ENCODE measurements at regions of chr20 and their contacts with region 1.

Region 1: GRCh38 chr20:63707549-63708300 is at the starts of genes ARFRP1 and ZGPAT:
- DNase-seq: peak; percentile 77 to 92 (median 88)
- ATAC-seq: peak; percentile 92
- H3K4me3 ChIP-seq: peak within 1 kb of the TSS; percentile 91
- H3K4me3 Mint-ChIP-seq: peak within 1 kb of the TSS; percentile 86 to 95 (median 90)
- H3K27ac ChIP-seq: peak within 1 kb of the TSS; percentile 81
- H3K27ac Mint-ChIP-seq: peak within 1 kb of the TSS; percentile 82 to 97 (median 87)
- H3K4me1 ChIP-seq: peaks cover 22 to 30% of the 10 kb centered on the region in 2 donors
- H3K4me1 Mint-ChIP-seq: peaks cover 33 to 61% (median 46%) of the 10 kb centered on the region in 7 donors
- H3K27me3 ChIP-seq: no peaks in the 10 kb centered on the region
- H3K27me3 Mint-ChIP-seq: no peaks in the 10 kb centered on the region
- total RNA-seq, gene ARFRP1: 55.4 to 92.1 (median 66.2) TPM
- total RNA-seq, gene ZGPAT: 42.9 to 49.9 (median 45.4) TPM

Region 2: DNA sequence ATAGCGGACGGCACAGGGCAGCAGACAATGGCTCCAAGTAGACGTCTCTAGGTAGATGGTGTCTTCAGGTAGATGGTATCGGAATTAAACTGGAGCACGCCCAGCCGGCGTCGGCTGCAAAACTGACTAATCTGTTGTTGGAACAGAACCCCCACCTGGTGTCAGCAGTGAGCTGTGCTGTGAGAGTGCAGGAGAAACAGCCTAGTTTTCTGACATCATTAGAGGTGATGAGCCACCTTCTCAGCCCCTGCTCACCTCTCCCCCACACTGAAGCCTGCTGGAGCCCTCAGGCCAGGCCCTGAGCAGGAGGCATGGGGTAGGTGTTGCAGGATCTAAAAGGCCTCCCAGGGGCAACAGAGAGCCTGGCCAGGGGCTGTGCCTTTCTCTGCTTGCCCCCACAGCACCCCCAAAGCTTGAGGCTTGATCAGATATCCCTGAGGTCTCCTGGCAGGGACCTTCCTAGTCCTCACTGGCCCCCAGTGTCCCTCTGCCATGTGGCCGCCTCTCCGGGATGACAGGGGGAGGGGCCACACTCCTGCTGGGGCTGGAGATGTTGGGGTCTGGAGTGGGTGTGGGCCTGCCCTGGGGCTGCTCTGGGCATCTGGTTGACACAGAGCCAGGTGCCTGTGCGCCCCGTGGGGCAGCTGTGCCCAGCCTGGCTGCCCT is 126.8 kb before region 1 on chr20:
- CTCF ChIA-PET with region 1: no interaction called
- POLR2A ChIA-PET with region 1: no interaction called
- intact Hi-C with region 1: loop called in 1 of 2 experiments (anchors 2 kb)
- DNase-seq: peak; percentile 30 to 87 (median 81)
- ATAC-seq: peak; percentile 96
- H3K4me3 ChIP-seq: no peak overlapping the region
- H3K4me3 Mint-ChIP-seq: peak overlapping the region in 1 of 10 donors; percentile 17
- H3K27ac ChIP-seq: no peak overlapping the region
- H3K27ac Mint-ChIP-seq: peak overlapping the region in 1 of 9 donors; percentile 74
- H3K4me1 ChIP-seq: peaks cover 0 to 10% of the 10 kb centered on the region in 2 donors
- H3K4me1 Mint-ChIP-seq: peaks cover 0 to 17% (median 14%) of the 10 kb centered on the region in 7 donors
- H3K27me3 ChIP-seq: no peaks in the 10 kb centered on the region
- H3K27me3 Mint-ChIP-seq: peaks cover 0 to 42% (median 0%) of the 10 kb centered on the region in 5 donors

Region 3: GRCh38 chr20:63733186-63734081 is 25.7 kb after region 1 on chr20:
- CTCF ChIA-PET with region 1: interaction called, 27 read pairs
- POLR2A ChIA-PET with region 1: interaction called, 137 read pairs
- intact Hi-C with region 1: loop called (anchors 1 to 2 kb)
- DNase-seq: no peak
- ATAC-seq: no peak
- H3K4me3 ChIP-seq: no peak overlapping the region
- H3K4me3 Mint-ChIP-seq: peak overlapping the region in 6 of 10 donors; percentile 18 to 68 (median 40)
- H3K27ac ChIP-seq: no peak overlapping the region
- H3K27ac Mint-ChIP-seq: peak overlapping the region in 8 of 9 donors; percentile 19 to 87 (median 68)
- H3K4me1 ChIP-seq: peaks cover 44 to 51% of the 10 kb centered on the region in 2 donors
- H3K4me1 Mint-ChIP-seq: peaks cover 24 to 33% (median 29%) of the 10 kb centered on the region in 7 donors
- H3K27me3 ChIP-seq: no peaks in the 10 kb centered on the region
- H3K27me3 Mint-ChIP-seq: no peaks in the 10 kb centered on the region

Region 4: GRCh38 chr20:63782051-63782471 is 74.3 kb after region 1 on chr20:
- CTCF ChIA-PET with region 1: interaction called, 5 read pairs
- POLR2A ChIA-PET with region 1: interaction called, 4 read pairs
- intact Hi-C with region 1: loop called in 1 of 2 experiments (anchors 1 kb)
- DNase-seq: peak in 6 of 9 donors; percentile 60 to 74 (median 64)
- ATAC-seq: peak; percentile 95
- H3K4me3 ChIP-seq: no peak overlapping the region
- H3K4me3 Mint-ChIP-seq: peak overlapping the region in 8 of 10 donors; percentile 31 to 78 (median 48)
- H3K27ac ChIP-seq: no peak overlapping the region
- H3K27ac Mint-ChIP-seq: peak overlapping the region in 6 of 9 donors; percentile 55 to 92 (median 64)
- H3K4me1 ChIP-seq: peaks cover 8 to 9% of the 10 kb centered on the region in 2 donors
- H3K4me1 Mint-ChIP-seq: peaks cover 9 to 24% (median 18%) of the 10 kb centered on the region in 7 donors
- H3K27me3 ChIP-seq: no peaks in the 10 kb centered on the region
- H3K27me3 Mint-ChIP-seq: no peaks in the 10 kb centered on the region

Region 5: GRCh38 chr20:63810730-63811494 is 103.2 kb after region 1 on chr20:
- CTCF ChIA-PET with region 1: no interaction called
- POLR2A ChIA-PET with region 1: no interaction called
- intact Hi-C with region 1: no loop called
- DNase-seq: no peak
- ATAC-seq: no peak
- H3K4me3 ChIP-seq: no peak overlapping the region
- H3K4me3 Mint-ChIP-seq: no peak overlapping the region
- H3K27ac ChIP-seq: no peak overlapping the region
- H3K27ac Mint-ChIP-seq: no peak overlapping the region
- H3K4me1 ChIP-seq: no peaks in the 10 kb centered on the region
- H3K4me1 Mint-ChIP-seq: no peaks in the 10 kb centered on the region
- H3K27me3 ChIP-seq: no peaks in the 10 kb centered on the region
- H3K27me3 Mint-ChIP-seq: peaks cover 0 to 4% (median 0%) of the 10 kb centered on the region in 5 donors

Region 6: GRCh38 chr20:63955827-63956663 is 248.3 kb after region 1 on chr20 and contains the start of gene UCKL1:
- CTCF ChIA-PET with region 1: no interaction called
- POLR2A ChIA-PET with region 1: interaction called, 4 read pairs
- intact Hi-C with region 1: loop called (anchors 1 to 2 kb)
- DNase-seq: peak; percentile 82 to 95 (median 93)
- ATAC-seq: peak; percentile 91
- H3K4me3 ChIP-seq: peak within 1 kb of the TSS; percentile 87
- H3K4me3 Mint-ChIP-seq: peak within 1 kb of the TSS; percentile 79 to 87 (median 86)
- H3K27ac ChIP-seq: peak within 1 kb of the TSS; percentile 93
- H3K27ac Mint-ChIP-seq: peak within 1 kb of the TSS; percentile 32 to 89 (median 80)
- H3K4me1 ChIP-seq: peaks cover 18 to 26% of the 10 kb centered on the region in 2 donors
- H3K4me1 Mint-ChIP-seq: peaks cover 19 to 37% (median 27%) of the 10 kb centered on the region in 7 donors
- H3K27me3 ChIP-seq: no peaks in the 10 kb centered on the region
- H3K27me3 Mint-ChIP-seq: no peaks in the 10 kb centered on the region
- total RNA-seq, gene UCKL1: 42.0 to 49.0 (median 46.6) TPM

Region 7: GRCh38 chr20:64119681-64120341 is 412.1 kb after region 1 on chr20:
- CTCF ChIA-PET with region 1: no interaction called
- POLR2A ChIA-PET with region 1: no interaction called
- intact Hi-C with region 1: loop called in 1 of 2 experiments (anchors 5 kb)
- DNase-seq: peak in 3 of 9 donors; percentile 2 to 24 (median 14)
- ATAC-seq: peak; percentile 18
- H3K4me3 ChIP-seq: peak overlapping the region; percentile 36
- H3K4me3 Mint-ChIP-seq: peak overlapping the region; percentile 39 to 80 (median 73)
- H3K27ac ChIP-seq: peak overlapping the region; percentile 22
- H3K27ac Mint-ChIP-seq: peak overlapping the region; percentile 69 to 85 (median 78)
- H3K4me1 ChIP-seq: peaks cover 5 to 9% of the 10 kb centered on the region in 2 donors
- H3K4me1 Mint-ChIP-seq: peaks cover 0 to 10% (median 8%) of the 10 kb centered on the region in 7 donors
- H3K27me3 ChIP-seq: no peaks in the 10 kb centered on the region
- H3K27me3 Mint-ChIP-seq: peaks cover 0 to 28% (median 0%) of the 10 kb centered on the region in 5 donors

Measured in naive thymus-derived CD4-positive, alpha-beta T cell (primary cell).